ENCODE measurements at regions of chr17 and their contacts with region 1.

Region 1: DNA sequence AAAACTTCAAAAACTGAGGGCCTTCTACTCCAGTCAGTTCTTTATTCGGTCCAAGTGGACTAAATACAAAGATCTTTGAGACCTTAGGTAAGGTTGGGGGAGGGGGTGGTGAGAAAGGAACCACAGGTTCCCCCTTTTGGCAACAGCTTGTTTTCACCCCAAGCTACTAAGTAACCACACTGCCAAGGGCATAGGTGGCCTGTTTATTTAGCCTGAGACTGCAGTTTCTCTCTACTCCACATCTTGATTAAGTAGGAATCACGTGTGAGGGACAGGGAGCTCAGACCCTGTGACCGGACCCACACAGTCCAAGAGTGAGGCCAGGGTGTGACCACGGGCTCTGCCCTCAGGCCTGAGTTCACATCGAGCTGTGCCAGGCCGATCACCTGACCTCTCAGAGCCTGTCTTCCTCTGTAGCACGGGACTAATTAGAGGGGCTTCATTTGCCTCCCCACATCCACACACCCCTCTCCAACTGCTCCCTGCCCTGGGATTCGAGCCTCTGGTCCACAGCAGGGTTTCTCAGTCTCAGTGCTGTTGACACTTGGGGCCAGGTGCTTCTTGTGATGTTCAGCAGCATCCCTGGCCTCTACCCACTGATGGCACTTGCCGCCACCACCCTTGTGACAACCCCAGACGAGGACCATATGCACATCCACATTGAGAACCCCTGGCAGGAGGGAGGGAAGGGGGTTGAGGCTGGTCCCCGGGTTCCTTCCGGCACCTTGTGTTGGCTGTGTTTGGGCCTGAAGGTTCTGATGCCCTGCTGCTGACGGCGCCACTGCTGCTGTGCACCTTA is 17.8 kb downstream of the ST6GALNAC2 start:
- DNase-seq: peak; percentile 37
- H3K4me3 Mint-ChIP-seq: peak overlapping the region; percentile 34
- H3K27ac Mint-ChIP-seq: peak overlapping the region; percentile 83
- H3K4me1 Mint-ChIP-seq: peaks cover 54% of the 10 kb centered on the region
- H3K27me3 Mint-ChIP-seq: no peaks in the 10 kb centered on the region
- CTCF ChIP-seq: no peak

Region 2: DNA sequence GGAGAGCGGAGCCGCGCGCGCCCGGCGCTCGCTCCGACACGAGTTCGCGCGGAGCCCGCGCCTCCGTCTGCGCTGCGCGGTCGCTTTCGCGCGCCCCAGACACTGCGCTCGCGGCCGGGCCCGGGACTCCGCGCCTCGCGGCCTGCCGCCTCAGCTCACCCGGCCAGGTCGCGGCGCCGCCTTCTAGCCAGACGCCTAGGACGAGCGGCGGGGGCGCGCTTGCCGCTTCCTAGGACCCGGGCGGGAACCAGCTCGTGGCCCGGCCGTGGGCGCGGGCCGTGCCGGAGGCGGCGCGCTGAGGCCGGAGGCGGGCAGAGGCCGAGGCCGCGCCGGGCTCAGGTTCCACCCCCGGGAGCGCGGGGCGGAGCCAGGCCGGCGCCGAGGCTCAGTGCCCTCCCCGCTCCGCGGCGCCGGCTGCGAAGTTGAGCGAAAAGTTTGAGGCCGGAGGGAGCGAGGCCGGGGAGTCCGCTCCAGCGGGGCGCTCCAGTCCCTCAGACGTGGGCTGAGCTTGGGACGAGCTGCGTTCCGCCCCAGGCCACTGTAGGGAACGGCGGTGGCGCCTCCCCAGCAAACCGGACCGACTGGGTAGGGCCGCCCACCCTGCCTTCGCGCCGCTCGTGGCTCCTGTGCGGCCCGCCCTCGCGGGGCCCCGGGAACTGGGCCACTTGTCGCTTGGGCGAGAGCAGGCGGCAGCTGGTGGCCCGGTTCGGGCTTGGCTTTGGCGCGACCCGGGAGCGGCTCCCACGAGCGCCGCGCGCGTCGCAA is 183.4 kb before region 1 on chr17 and contains the start of gene SPHK1:
- CTCF ChIA-PET with region 1: no interaction called
- intact Hi-C with region 1: no loop called
- DNase-seq: peak; percentile 78
- H3K4me3 Mint-ChIP-seq: peak within 1 kb of the TSS; percentile 71
- H3K27ac Mint-ChIP-seq: no peak within 1 kb of the TSS
- H3K4me1 Mint-ChIP-seq: no peaks in the 10 kb centered on the region
- H3K27me3 Mint-ChIP-seq: peaks cover 14% of the 10 kb centered on the region
- CTCF ChIP-seq: no peak
- total RNA-seq, gene SPHK1: 1.5 and 1.7 TPM in 2 replicates

Region 3: DNA sequence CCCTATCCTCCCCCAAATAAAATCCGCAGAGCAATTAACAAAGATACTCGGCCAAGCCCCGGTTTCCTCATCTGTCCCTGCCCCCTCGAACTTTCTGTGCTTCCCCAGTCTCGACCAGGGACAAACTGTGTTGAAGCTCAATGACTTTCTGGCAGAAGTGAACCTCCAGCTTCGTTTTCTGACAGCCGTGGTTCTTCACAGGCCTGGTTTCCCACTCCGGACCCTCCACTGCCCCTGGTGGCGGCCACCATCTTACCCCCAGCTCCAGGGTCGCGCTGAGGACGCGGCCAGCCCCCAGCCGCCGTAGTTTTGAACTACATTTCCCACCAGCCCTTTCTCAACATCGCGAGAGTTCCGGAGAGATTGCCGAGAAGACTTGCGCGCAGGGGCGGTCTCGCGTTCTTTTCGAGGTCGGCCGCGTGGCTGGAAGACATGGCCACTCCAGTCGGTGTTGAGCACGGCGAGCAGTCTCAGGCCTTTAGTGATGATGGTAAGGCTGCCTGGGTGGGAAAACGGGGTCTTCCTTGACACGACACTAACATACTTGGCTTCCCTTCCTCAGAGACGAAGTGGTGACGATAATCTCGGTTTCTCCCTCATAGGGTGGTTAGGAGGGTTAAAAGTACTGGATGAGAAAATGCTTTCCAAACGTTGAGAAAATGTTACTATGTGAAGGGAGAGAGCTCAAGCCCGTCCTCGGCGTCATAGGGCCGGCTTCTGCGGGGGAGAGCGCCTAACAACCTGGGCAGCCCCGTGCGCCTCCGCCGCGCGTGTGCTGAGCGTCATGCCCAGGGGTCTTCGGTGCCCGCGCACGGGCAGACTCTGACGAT is 10.2 kb before region 1 on chr17:
- CTCF ChIA-PET with region 1: interaction called, 13 read pairs
- intact Hi-C with region 1: no loop called
- DNase-seq: peak; percentile 97
- H3K4me3 Mint-ChIP-seq: peak overlapping the region; percentile 91
- H3K27ac Mint-ChIP-seq: peak overlapping the region; percentile 97
- H3K4me1 Mint-ChIP-seq: peaks cover 8% of the 10 kb centered on the region
- H3K27me3 Mint-ChIP-seq: no peaks in the 10 kb centered on the region
- CTCF ChIP-seq: peak; percentile 69

Region 4: GRCh38 chr17:76585818-76586593 is 18.2 kb after region 1 on chr17 and contains the start of gene ST6GALNAC2:
- CTCF ChIA-PET with region 1: interaction called, 12 read pairs
- intact Hi-C with region 1: no loop called
- DNase-seq: peak; percentile 86
- H3K4me3 Mint-ChIP-seq: peak within 1 kb of the TSS; percentile 78
- H3K27ac Mint-ChIP-seq: no peak within 1 kb of the TSS
- H3K4me1 Mint-ChIP-seq: peaks cover 9% of the 10 kb centered on the region
- H3K27me3 Mint-ChIP-seq: peaks cover 10% of the 10 kb centered on the region
- CTCF ChIP-seq: no peak
- total RNA-seq, gene ST6GALNAC2: 10.5 and 11.6 TPM in 2 replicates

Region 5: GRCh38 chr17:76643553-76644148 is 75.8 kb after region 1 on chr17 and contains the start of gene ST6GALNAC1:
- CTCF ChIA-PET with region 1: no interaction called
- intact Hi-C with region 1: no loop called
- DNase-seq: peak; percentile 68
- H3K4me3 Mint-ChIP-seq: peak within 1 kb of the TSS; percentile 72
- H3K27ac Mint-ChIP-seq: peak within 1 kb of the TSS; percentile 70
- H3K4me1 Mint-ChIP-seq: peaks cover 68% of the 10 kb centered on the region
- H3K27me3 Mint-ChIP-seq: no peaks in the 10 kb centered on the region
- CTCF ChIP-seq: no peak
- total RNA-seq, gene ST6GALNAC1: 52.2 and 52.4 TPM in 2 replicates

Region 6: GRCh38 chr17:76820039-76820438 is 252.2 kb after region 1 on chr17:
- CTCF ChIA-PET with region 1: no interaction called
- intact Hi-C with region 1: no loop called
- DNase-seq: no peak
- H3K4me3 Mint-ChIP-seq: no peak overlapping the region
- H3K27ac Mint-ChIP-seq: no peak overlapping the region
- H3K4me1 Mint-ChIP-seq: no peaks in the 10 kb centered on the region
- H3K27me3 Mint-ChIP-seq: peaks cover 78% of the 10 kb centered on the region
- CTCF ChIP-seq: no peak